ENCODE measurements at regions of chr2 and their contacts with region 1.

Region 1: DNA sequence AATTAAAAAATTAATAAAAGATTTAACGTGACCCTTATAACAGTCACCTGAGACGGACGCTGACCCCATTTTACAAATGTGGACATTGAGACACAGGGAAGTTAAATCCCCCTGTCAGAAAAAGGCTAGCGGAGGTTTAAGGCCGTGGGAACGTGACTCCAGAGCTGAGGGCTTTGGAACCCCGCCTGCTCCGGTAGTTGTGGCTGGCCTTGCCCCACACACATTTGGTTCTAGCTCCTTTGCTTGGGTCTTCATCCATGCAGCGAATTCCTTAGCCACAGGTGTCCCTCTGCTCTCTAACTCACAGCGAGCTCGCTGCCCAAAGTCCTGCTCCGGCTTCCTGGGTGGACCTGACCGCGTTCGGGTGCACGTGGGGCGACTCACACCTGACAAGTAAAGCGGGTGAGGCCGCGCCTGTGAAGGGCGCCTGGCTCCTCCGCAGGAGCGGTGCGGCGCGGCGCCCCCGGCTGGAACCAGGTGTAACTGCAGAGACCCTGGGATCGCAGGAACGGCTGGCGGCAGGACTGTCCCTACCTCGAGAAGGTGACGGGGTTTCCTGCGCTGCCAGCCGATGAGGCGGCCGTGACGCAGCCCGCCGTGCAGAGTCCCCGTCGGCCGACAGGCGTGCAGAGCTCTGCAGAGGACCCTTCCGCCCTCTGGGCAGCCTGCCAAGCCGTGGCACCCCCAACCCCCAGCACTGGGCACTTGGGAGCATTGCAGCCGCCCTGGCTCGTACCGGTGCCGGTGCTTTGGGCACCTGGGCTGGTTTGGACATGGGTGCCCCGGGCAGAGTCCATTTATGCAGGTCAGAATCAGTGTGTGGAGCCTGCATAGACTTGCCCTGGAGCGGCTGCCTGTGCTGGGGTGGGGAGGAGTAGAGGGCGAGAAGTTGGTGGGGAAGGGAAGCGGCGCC is 2.4 kb upstream of the PROC start:
- DNase-seq: peak; percentile 83
- ATAC-seq: peak; percentile 95
- H3K4me3 Mint-ChIP-seq: peak overlapping the region; percentile 75
- H3K27ac Mint-ChIP-seq: peak overlapping the region; percentile 74
- H3K4me1 Mint-ChIP-seq: peaks cover 30% of the 10 kb centered on the region
- H3K27me3 Mint-ChIP-seq: peaks cover 13% of the 10 kb centered on the region

Region 2: GRCh38 chr2:127398239-127398590 is 17.6 kb before region 1 on chr2:
- CTCF ChIA-PET with region 1: interaction called, 10 read pairs
- POLR2A ChIA-PET with region 1: no interaction called
- DNase-seq: peak; percentile 58
- ATAC-seq: peak; percentile 93
- H3K4me3 Mint-ChIP-seq: no peak overlapping the region
- H3K27ac Mint-ChIP-seq: no peak overlapping the region
- H3K4me1 Mint-ChIP-seq: peaks cover 13% of the 10 kb centered on the region
- H3K27me3 Mint-ChIP-seq: no peaks in the 10 kb centered on the region

Region 3: GRCh38 chr2:127437781-127438726 is 22.2 kb after region 1 on chr2:
- CTCF ChIA-PET with region 1: no interaction called
- POLR2A ChIA-PET with region 1: no interaction called
- DNase-seq: no peak
- ATAC-seq: no peak
- H3K4me3 Mint-ChIP-seq: no peak overlapping the region
- H3K27ac Mint-ChIP-seq: no peak overlapping the region
- H3K4me1 Mint-ChIP-seq: no peaks in the 10 kb centered on the region
- H3K27me3 Mint-ChIP-seq: peaks cover 2% of the 10 kb centered on the region

Region 4: DNA sequence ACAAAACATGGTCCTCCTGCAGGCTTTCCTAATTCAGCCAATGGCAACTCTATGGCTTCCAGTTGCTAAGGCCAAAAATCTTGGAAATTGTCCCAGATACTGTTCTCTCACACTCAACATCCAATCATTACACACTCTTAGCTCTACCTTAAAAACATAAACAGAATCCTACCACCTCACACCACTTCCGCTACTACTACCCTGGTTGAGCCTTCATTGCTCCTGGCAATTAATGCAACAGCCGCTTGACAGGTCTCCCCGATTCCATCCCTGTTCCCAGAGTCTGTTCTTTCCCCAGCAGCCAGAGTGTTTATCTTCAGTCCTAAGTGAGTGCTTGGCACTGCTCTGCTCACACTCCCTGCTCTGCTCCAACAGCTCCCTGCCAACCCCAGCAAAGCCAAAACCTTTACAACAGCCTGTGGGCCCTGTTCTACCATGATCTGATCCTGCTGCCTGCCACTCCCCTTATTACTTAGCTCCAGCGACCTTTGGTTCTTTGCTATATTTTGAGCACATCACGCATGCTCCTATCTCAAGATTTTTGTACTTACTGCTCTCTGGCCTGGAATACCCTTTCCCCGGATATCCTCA is 537.4 kb after region 1 on chr2:
- CTCF ChIA-PET with region 1: no interaction called
- POLR2A ChIA-PET with region 1: no interaction called
- DNase-seq: no peak
- ATAC-seq: no peak
- H3K4me3 Mint-ChIP-seq: no peak overlapping the region
- H3K27ac Mint-ChIP-seq: no peak overlapping the region
- H3K4me1 Mint-ChIP-seq: peaks cover 6% of the 10 kb centered on the region
- H3K27me3 Mint-ChIP-seq: no peaks in the 10 kb centered on the region

Measured in activated CD8-positive, alpha-beta T cell treated with anti-CD3 and anti-CD28 coated beads, Interleukin-2, amount 10 ng/mL, durations not matched to agents 7 days and 5 days (primary cell).